CD4-positive, alpha-beta T cell (primary cell): ENCODE measurements at regions of chr12 and their contacts with region 1.

Region 1: GRCh38 chr12:27014085-27014858 is at the start of gene TM7SF3:
- DNase-seq: peak; percentile 91 to 99 (median 96)
- ATAC-seq: peak; percentile 82
- H3K4me3 ChIP-seq: peak within 1 kb of the TSS; percentile 89
- H3K4me3 Mint-ChIP-seq: peak within 1 kb of the TSS; percentile 93
- H3K27ac ChIP-seq: peak within 1 kb of the TSS; percentile 92 to 96
- H3K27ac Mint-ChIP-seq: peak within 1 kb of the TSS; percentile 97
- H3K4me1 ChIP-seq: peaks cover 25% of the 10 kb centered on the region
- H3K4me1 Mint-ChIP-seq: peaks cover 57% of the 10 kb centered on the region
- H3K27me3 ChIP-seq: no peaks in the 10 kb centered on the region
- H3K27me3 Mint-ChIP-seq: no peaks in the 10 kb centered on the region
- CTCF ChIP-seq: peak; percentile 99
- total RNA-seq, gene TM7SF3: 8.3 to 9.5 TPM

Region 2: DNA sequence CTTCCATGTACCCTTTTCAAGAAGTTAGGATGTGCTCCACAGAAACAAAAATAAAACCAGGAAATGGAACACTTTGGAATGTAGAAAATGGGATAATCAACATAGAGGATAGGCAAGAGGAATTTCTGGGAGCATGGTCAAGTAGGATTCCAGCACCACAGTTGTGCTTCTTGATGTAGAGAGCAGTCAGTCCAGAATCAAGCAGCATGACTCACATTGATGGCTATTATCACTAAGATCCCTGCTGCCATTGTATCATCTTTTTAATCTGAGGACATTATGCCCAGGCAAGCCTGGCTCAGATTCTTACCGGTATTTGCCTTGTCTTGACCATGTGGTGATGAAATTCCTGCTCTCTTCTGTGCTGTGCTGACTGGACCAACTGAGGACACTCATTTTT is 1813.6 kb before region 1 on chr12:
- CTCF ChIA-PET with region 1: no interaction called
- POLR2A ChIA-PET with region 1: no interaction called
- intact Hi-C with region 1: loop called in 1 of 2 experiments (anchors 5 kb)
- DNase-seq: no peak
- ATAC-seq: no peak
- H3K4me3 ChIP-seq: no peak overlapping the region
- H3K4me3 Mint-ChIP-seq: no peak overlapping the region
- H3K27ac ChIP-seq: no peak overlapping the region
- H3K27ac Mint-ChIP-seq: no peak overlapping the region
- H3K4me1 ChIP-seq: peaks cover 3% of the 10 kb centered on the region
- H3K4me1 Mint-ChIP-seq: peaks cover 63% of the 10 kb centered on the region
- H3K27me3 ChIP-seq: no peaks in the 10 kb centered on the region
- H3K27me3 Mint-ChIP-seq: no peaks in the 10 kb centered on the region
- CTCF ChIP-seq: no peak

Region 3: DNA sequence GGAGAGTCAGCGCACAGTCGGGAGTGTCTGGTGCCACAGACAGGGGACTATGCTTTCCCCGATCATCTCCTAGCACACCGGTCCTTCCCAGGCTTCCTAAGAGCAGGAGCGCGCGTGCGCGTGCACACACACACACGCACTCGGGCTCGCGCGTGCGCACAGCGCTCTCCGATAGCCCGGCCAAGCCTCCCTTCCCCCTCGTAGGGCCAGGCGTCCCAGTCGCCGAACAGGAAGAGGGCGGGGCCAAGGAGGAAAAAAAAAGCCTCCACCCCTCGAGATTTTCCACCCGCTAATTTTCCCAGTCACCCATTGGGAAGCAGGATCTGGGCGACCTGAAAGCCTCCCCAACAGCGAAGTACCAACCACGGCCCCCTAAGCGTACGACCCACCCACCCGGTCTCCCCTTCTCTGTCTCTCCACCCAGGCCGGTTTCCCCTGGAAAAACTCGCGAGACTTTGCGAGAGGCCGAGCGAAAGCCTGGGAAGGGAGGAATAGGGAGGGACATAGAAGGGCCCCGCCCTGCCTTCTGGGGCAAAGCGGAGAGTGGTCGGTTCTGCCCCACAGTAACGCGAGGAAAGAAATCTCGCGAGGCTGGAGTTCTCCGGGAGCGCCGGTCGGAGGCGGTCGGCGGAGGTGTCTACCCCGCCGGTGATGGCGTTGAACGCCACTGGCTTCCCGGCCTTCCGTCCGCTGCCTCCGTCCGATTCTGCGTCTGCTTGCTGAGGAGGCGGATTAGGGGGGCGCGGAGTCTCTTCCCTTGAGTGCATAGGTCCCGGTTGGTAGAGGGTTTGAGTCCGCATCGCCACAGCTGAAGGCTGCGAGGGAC is 76.2 kb before region 1 on chr12 and contains the starts of genes FGFR1OP2 and INTS13:
- CTCF ChIA-PET with region 1: interaction called, 6 read pairs
- POLR2A ChIA-PET with region 1: interaction called, 8 read pairs
- intact Hi-C with region 1: loop called (anchors 1 kb)
- DNase-seq: peak; percentile 89 to 98 (median 94)
- ATAC-seq: peak; percentile 91
- H3K4me3 ChIP-seq: peak within 1 kb of the TSS; percentile 71
- H3K4me3 Mint-ChIP-seq: peak within 1 kb of the TSS; percentile 90
- H3K27ac ChIP-seq: peak within 1 kb of the TSS; percentile 94 to 95
- H3K27ac Mint-ChIP-seq: peak within 1 kb of the TSS; percentile 86
- H3K4me1 ChIP-seq: peaks cover 22% of the 10 kb centered on the region
- H3K4me1 Mint-ChIP-seq: peaks cover 80% of the 10 kb centered on the region
- H3K27me3 ChIP-seq: no peaks in the 10 kb centered on the region
- H3K27me3 Mint-ChIP-seq: no peaks in the 10 kb centered on the region
- CTCF ChIP-seq: no peak
- total RNA-seq, gene FGFR1OP2: 44.8 to 46.8 TPM
- total RNA-seq, gene INTS13: 8.5 to 12.1 TPM

Region 4: DNA sequence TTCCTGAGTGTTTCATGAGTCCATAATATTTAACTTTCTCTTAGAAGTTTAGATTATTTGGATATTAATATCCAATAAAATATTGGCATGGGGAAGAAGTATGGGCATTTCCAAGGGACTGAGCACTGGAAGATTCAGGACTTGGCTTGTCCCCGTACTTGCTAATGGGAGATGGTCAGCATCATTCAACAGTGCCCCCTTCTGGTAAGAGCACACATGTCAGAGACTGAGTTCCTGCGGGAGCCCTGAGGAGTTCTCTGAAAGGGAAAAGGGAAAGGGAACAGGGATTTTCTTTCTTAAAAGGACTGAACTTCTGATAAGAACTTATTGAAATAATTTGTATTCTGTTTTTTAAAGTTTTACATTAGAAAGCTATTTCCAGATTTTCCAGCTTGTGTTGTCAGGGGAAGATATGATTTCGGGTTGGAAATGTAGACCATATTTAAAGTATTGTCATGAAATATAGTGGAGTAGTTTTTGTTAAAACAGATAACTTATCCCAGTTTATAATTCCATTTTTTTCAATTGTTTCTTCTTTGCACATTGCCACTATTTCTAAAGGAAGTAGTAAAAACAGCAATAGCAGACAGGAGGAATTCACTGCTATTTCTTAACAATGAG is 127.9 kb after region 1 on chr12:
- CTCF ChIA-PET with region 1: no interaction called
- POLR2A ChIA-PET with region 1: no interaction called
- intact Hi-C with region 1: loop called in 1 of 2 experiments (anchors 2 kb)
- DNase-seq: peak in 11 of 14 experiments; percentile 1 to 75 (median 17)
- ATAC-seq: no peak
- H3K4me3 ChIP-seq: no peak overlapping the region
- H3K4me3 Mint-ChIP-seq: no peak overlapping the region
- H3K27ac ChIP-seq: no peak overlapping the region
- H3K27ac Mint-ChIP-seq: no peak overlapping the region
- H3K4me1 ChIP-seq: peaks cover 4% of the 10 kb centered on the region
- H3K4me1 Mint-ChIP-seq: no peaks in the 10 kb centered on the region
- H3K27me3 ChIP-seq: no peaks in the 10 kb centered on the region
- H3K27me3 Mint-ChIP-seq: no peaks in the 10 kb centered on the region
- CTCF ChIP-seq: peak; percentile 82

Region 5: GRCh38 chr12:27710592-27711316 is 696.5 kb after region 1 on chr12 and contains the start of gene MRPS35:
- CTCF ChIA-PET with region 1: no interaction called
- POLR2A ChIA-PET with region 1: interaction called, 4 read pairs
- intact Hi-C with region 1: loop called in 1 of 2 experiments (anchors 10 kb)
- DNase-seq: peak; percentile 83 to 95 (median 88)
- ATAC-seq: peak; percentile 96
- H3K4me3 ChIP-seq: peak within 1 kb of the TSS; percentile 71
- H3K4me3 Mint-ChIP-seq: peak within 1 kb of the TSS; percentile 98
- H3K27ac ChIP-seq: peak within 1 kb of the TSS; percentile 60 to 69
- H3K27ac Mint-ChIP-seq: peak within 1 kb of the TSS; percentile 96
- H3K4me1 ChIP-seq: peaks cover 25% of the 10 kb centered on the region
- H3K4me1 Mint-ChIP-seq: peaks cover 41% of the 10 kb centered on the region
- H3K27me3 ChIP-seq: no peaks in the 10 kb centered on the region
- H3K27me3 Mint-ChIP-seq: no peaks in the 10 kb centered on the region
- CTCF ChIP-seq: no peak
- total RNA-seq, gene MRPS35: 22.1 to 23.9 TPM